Breast epithelium (tissue), 4 donors: ENCODE measurements at regions of chr10 and their contacts with region 1.

Region 1: DNA sequence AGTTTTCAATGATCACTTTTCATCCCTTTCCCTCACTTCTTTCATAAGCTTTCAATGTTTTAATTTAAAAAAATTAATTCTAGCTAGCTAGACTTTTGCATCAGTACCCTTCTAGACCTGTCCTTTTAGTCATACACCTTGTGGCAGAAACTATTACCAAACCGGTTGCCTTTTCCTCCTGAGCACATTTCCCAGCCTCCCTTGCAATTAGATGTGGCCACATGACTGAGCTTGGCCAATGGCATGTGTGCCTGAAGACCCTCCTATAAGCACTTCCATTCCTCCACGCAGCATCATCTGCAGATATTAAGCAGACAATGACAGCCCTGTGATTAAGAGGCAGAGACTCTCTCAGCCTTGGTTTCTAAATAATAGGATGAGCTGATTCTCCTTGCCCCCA is 12.3 kb downstream of the DKK1 start:
- DNase-seq: no peak
- H3K4me3 ChIP-seq: no peak overlapping the region
- H3K27ac ChIP-seq: no peak overlapping the region
- H3K4me1 ChIP-seq: no peaks in the 10 kb centered on the region
- H3K27me3 ChIP-seq: no peaks in the 10 kb centered on the region
- CTCF ChIP-seq: no peak
- POLR2A ChIP-seq: no peak

Region 2: GRCh38 chr10:52479567-52479966 is 153.2 kb after region 1 on chr10:
- intact Hi-C with region 1: loop called (anchors 5 kb)
- DNase-seq: no peak
- H3K4me3 ChIP-seq: no peak overlapping the region
- H3K27ac ChIP-seq: no peak overlapping the region
- H3K4me1 ChIP-seq: no peaks in the 10 kb centered on the region
- H3K27me3 ChIP-seq: peaks cover 0 to 3% of the 10 kb centered on the region in 2 donors
- CTCF ChIP-seq: no peak
- POLR2A ChIP-seq: no peak